ENCODE measurements at regions of chr6 and their contacts with region 1.

Region 1: DNA sequence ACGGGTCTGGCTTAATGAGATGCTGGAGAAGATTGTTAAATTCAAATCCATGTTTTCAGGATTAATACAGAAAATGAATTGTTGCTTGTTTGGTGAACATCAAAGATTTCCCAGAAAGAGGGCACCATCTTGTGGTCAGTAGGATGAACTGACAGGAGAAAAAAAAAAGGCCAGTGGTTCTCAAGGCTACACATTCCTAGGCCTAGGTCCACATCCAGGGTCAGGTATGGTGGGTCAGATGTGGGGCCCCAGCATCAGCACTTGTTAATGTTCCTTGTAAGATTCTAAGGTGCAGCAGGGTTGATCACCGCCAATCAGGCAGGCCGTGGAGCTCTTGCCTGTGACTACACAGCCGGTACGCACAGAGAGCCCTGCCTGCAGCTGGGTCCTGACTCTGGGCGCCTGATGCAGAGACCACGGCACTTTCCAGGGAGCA is 34.0 kb upstream of the FOXO3 start:
- DNase-seq: peak; percentile 64
- H3K4me3 ChIP-seq: no peak overlapping the region
- H3K27ac ChIP-seq: no peak overlapping the region
- H3K4me1 ChIP-seq: no peaks in the 10 kb centered on the region
- H3K27me3 ChIP-seq: no peaks in the 10 kb centered on the region

Region 2: DNA sequence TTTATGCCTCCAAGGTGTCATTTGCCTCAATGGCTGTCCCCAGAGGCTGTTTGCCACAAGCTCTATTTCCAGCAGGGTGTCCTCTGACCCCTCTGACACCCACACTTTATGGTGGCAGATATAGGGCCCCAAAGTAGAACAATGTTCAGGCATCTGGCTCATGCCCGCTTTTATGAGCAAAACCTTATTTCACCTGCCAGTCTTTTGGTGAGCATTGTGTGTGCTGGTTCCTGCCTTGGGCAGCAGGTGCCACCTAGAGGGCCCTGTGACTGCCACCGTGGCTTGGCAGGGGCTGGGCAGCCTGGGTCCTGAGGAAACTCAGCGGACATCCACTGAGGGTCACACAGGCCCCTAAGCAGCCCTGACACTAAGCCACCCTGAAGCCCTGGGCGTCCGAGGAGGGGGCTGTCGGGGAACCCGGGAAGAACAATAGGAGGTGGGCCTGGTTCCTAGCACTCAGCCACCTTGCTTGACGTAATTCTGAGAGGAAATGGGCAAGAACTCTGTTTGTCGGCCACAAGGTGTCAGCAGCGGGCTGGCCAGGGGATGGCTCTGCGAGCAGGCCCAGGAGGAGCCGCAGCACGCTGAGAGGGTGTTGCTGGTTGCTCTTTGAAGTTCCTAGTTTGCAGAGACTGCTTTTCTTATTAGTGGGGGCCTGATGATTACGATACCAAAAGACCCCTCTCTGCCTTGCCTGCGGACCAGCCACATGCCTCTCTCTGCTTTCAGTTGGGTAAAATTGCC is 851.6 kb before region 1 on chr6:
- in situ Hi-C with region 1: no loop called
- DNase-seq: peak; percentile 91
- H3K4me3 ChIP-seq: no peak overlapping the region
- H3K27ac ChIP-seq: peak overlapping the region; percentile 25; the same call in 1 of the 2 replicates
- H3K4me1 ChIP-seq: peaks cover 14% of the 10 kb centered on the region; the same call in 1 of the 2 replicates
- H3K27me3 ChIP-seq: no peaks in the 10 kb centered on the region

Region 3: GRCh38 chr6:107800564-107801164 is 726.1 kb before region 1 on chr6:
- in situ Hi-C with region 1: no loop called
- DNase-seq: peak; percentile 12
- H3K4me3 ChIP-seq: no peak overlapping the region
- H3K27ac ChIP-seq: no peak overlapping the region
- H3K4me1 ChIP-seq: no peaks in the 10 kb centered on the region
- H3K27me3 ChIP-seq: peaks cover 53% of the 10 kb centered on the region

Region 4: DNA sequence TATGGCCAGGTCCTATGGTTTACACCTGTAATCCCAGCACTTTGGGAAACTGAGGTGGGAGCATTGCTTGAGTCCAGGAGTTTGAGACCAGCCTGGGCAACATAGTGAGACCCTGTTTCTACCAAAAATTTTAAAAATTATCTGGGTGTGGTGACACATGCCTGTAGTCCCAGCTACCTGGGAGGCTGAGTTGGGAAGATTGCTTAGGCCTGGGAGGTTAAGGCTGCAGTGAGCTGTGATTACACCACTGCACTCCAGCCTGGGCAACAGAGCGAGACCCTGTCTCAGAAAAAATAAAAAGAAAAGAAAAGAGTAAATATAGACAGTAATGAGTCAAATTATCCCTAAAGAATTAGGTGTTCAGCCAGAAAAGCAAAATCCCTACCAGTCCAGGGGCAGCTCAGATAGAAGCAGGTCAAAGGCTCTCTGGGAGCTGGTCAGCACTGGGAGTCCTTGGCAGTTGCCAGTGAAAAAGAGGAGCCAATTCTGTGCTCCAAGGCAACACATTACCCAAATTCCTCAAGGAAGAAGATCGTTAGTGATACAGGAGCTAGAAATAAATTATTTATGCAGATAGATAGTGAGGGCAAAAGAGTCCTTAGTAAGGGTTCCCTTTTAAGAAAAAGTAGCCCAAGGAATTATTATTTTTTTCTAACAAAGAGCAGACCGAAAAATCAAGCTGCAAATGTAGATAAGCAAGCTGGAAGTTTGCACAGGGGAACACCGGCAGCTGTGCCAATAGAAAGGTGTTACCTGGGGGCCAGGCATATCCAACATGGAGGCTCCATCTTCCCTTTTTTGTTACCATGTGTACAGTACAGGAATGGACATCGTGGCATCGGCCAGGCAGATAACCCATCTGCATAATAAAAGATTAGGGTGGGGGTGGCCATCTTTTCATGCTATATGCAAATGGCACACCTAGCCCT is 537.3 kb before region 1 on chr6:
- in situ Hi-C with region 1: loop called (anchors 5 kb)
- DNase-seq: no peak
- H3K4me3 ChIP-seq: no peak overlapping the region
- H3K27ac ChIP-seq: no peak overlapping the region
- H3K4me1 ChIP-seq: no peaks in the 10 kb centered on the region
- H3K27me3 ChIP-seq: no peaks in the 10 kb centered on the region

Measured in GM23248 (cell line).